ENCODE measurements at regions of chr2 and their contacts with region 1.

Region 1: DNA sequence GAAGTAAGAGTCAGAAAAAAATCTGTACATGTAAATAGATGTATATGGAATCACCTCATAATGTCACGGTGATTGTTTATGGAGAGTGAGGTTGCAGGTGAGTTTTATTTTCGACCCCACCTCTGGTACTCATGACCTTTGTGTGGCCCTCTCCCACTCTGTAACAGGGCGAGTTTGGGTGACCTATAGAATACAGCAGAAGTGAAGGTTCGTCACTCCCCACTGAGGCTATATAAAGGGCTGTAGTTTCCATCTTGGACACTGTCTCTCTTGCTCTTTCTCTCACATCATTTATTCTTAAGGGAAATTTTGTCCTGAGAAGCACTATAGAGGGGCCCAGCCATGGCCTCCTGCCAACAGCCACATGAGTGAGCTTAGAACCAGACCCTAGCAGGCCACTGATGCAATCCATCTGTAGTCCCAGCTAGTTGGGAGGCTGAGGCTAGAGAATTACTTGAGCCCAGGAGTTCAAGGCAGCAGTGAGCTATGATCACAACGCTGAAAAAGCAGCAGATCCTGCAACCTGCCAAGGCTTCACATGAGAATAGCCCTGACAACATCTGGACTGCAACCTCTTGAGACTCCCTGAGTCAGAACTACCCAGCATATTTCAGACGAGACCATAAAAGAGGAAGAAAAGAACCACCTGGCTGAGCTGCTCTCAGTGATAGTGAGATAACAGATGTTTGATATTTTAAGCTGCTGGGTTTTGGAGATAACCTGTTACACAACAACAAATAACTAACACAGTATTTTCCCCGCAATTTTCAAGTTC is 74.3 kb upstream of the SLC1A4 start:
- DNase-seq: no peak
- ATAC-seq: peak; percentile 32
- H3K4me3 ChIP-seq: no peak overlapping the region
- H3K4me1 ChIP-seq: peaks cover 8% of the 10 kb centered on the region
- CTCF ChIP-seq: no peak

Region 2: GRCh38 chr2:64767670-64768468 is 147.1 kb before region 1 on chr2:
- intact Hi-C with region 1: no loop called
- DNase-seq: peak; percentile 88 to 93 (median 89)
- ATAC-seq: peak; percentile 94
- H3K4me3 ChIP-seq: peak overlapping the region; percentile 43
- H3K4me1 ChIP-seq: peaks cover 11% of the 10 kb centered on the region
- CTCF ChIP-seq: no peak

Region 3: GRCh38 chr2:64873472-64873924 is 41.4 kb before region 1 on chr2:
- intact Hi-C with region 1: no loop called
- DNase-seq: peak; percentile 83 to 89 (median 86)
- ATAC-seq: peak; percentile 91
- H3K4me3 ChIP-seq: no peak overlapping the region
- H3K4me1 ChIP-seq: no peaks in the 10 kb centered on the region
- CTCF ChIP-seq: peak; percentile 96

Region 4: DNA sequence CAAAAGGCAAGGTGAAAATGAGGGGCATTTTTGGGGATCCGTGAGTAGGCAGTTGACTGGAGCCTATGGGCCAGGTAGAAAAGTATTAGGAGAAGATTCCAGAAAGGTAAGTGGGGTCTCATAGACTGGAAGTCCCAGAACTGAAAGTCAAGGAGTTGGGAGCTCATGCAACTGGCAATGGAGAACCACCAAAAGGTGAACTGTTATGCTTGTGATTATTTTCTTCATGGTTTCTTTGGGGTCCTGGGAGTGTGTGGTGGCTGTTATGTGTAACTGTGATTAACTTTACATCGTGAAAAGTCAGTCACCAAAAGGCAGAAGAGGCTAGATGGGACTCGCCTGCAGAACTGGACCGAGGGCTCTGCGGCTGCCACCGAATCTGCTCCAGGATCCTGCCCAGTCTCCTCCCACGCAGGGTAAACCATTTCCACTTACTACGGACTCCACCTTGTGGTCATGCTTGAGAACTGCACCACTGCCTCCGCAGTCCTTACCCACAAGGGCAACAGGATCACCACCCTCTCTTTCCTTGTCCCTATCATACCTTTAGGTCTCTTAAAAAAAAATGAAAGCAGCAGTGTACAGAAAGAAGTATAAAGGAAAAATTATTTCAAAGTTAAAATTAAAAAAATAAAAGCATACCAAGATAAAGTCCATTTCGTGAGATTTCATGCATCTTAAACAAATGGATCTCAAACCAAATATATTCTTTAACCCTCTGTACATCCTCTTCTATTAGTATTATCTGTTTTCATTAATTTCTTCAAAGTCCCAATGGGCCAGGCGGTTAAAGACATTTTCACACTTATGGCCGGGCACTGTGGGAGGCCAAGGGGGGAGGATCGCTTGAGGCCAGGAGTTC is 125.7 kb after region 1 on chr2:
- intact Hi-C with region 1: loop called (anchors 2 to 5 kb)
- DNase-seq: peak; percentile 82 to 94 (median 86)
- ATAC-seq: peak; percentile 99
- H3K4me3 ChIP-seq: no peak overlapping the region
- H3K4me1 ChIP-seq: no peaks in the 10 kb centered on the region
- CTCF ChIP-seq: peak; percentile 93

Region 5: DNA sequence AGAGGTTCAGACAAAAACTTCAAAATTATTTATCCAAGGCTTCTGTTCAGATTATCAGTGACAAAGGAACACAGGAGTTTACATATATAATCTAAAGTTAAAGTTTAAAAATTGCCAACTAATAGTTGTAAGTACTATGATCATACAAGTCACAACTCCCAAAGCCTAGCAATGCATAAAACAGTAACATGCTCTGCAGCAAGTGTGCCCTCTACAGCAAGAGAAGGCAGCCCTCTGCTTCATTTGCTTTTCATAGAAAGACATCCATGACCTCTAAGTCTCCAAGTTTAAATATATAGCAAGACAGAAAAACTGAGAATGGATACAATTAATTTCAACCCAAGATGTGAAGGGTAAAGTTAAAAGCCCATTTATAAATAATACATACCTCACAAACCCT is 201.7 kb after region 1 on chr2:
- intact Hi-C with region 1: no loop called
- DNase-seq: no peak
- ATAC-seq: no peak
- H3K4me3 ChIP-seq: no peak overlapping the region
- H3K4me1 ChIP-seq: peaks cover 61% of the 10 kb centered on the region
- CTCF ChIP-seq: no peak

Measured in mucosa of descending colon (tissue), 3 donors.